ENCODE measurements at regions of chr17 and their contacts with region 1.

Region 1: DNA sequence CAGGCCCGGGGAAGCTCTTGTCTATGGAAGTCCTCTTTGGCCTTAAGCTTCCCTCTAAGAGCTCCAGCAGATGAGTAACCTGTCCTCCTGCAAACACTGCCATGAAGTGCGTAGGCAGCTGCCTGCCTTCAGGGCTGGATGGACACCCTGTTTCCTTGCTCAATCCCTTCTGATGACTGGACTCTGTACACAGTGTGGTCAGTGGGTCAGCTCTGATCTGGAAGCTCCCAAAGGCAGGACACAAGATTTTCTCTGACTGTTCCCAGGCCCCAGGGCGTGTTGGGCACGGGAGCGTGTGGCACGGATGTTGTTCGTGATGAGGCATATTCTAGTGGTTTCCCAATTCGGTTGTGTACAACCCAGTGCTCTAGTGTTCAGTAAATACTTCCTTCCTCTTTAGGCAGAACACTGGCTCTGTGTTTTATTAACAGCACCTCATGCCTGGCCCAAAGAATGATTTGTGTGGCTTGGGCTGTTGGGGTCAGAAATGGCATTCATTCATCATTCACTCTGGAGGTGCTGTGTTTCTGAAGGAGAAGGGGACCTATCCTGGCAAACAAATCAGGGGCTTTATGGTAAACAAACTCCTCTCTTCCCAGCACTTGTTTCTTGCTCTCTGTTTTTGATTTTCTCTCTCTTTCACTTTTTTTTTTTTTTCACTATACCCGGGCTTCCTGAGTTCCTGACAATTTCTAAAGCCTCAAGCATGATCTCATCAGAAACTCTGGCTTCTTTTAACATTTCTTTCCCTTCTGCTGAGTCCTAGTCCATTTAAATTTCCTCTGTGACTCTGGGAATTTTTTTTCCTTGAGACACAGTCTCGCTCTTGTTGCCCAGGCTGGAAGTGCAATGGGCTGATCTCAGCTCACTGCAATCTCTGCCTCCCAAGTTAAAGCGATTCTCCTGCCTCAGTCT is 12.0 kb upstream of the RNF157 start:
- DNase-seq: peak; percentile 48
- ATAC-seq: peak; percentile 83

Region 2: DNA sequence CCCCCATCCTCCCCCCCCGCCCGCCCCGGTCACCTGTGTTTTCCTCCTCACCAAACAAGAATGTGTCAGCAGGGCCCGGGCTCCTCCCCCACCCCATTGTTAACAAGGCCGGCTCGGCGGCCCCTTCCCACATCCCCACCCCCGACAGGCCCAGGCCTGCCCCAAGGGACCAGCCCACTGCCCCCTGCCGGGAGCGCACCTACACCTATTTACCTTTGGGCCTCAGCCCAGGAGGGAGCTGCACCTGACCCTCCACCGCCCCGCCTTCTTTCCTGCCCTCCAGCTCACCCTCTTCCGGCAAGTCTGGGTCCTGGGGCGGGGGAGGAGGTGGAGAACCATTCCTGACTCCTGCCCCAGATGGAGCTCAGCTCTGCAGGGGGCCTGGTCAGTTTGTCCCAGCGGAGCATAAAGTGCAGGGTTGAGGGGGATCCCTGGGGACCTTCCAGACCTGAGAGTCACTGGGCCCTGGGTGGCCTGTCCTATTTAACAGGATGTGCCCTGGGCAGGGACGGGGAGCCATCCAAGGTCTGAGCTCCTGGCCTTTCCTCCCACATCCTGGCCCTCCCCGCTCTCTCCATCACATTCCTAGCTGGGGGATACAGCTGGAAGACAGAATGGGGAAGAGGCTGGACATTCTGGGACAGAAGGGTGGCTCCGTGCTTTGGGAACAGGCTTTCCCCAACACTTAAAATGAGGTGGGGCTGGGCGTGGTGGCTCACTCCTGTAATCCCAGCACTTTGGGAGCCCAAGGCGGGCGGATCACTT is 119.5 kb before region 1 on chr17:
- intact Hi-C with region 1: no loop called
- DNase-seq: no peak
- ATAC-seq: no peak

Region 3: GRCh38 chr17:76147211-76148014 is 104.9 kb before region 1 on chr17:
- intact Hi-C with region 1: no loop called
- DNase-seq: no peak
- ATAC-seq: no peak

Region 4: DNA sequence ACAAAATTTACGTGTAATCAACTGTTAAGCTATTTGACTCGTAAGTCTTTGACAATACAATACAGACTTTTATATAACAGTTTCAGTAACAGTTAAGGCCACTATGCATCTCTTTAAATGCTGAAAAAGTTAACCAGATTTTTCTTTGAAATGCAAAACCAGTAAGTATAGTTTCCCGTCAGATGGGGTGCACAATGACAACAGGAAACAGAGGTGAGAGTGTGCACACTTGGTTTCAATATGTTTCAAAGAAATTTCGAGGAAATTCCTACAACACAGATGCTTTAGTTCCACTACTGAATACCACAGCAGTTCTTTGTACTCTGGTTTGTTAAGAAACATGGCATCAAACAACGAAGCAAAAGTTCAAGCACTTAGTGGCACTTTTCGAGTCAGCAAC is 60.4 kb before region 1 on chr17:
- intact Hi-C with region 1: loop called (anchors 10 kb)
- DNase-seq: no peak
- ATAC-seq: no peak